PC-9 (cell line): ENCODE measurements at regions of chr2 and their contacts with region 1.

Region 1: DNA sequence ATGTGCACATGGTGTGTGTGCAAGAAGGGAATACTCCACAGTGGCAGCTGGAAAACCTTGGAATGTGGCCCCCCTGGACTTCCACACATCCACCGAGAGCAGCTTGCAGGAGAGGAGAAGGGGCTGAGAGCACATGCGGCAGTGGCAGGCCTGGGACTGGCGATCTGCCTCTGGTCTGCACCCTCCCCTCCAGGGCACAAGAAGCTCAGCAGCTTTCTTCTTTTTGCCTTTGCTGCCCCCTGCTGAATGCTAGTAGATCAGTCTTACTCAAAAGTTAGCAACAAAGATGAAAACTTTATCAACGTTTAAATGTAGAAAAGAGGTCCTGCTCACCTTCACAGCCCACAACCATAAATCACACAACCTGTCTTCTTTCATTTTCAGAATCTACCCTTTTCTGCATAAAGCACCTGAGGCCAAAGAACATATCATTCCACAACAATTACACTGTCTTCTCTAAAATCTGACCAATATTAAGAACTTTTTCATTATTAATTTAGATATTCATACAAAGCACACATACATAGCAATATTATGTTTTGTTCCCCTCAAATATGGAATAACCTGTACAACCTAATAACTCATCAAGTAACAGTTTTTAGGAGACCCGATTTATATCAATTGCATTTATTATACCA is 34.6 kb downstream of the TGFBRAP1 start:
- DNase-seq: peak; percentile 13 to 16
- H3K4me3 ChIP-seq: no peak overlapping the region
- H3K27ac ChIP-seq: no peak overlapping the region
- H3K4me1 ChIP-seq: no peaks in the 10 kb centered on the region
- H3K27me3 ChIP-seq: no peaks in the 10 kb centered on the region
- CTCF ChIP-seq: peak; percentile 67

Region 2: DNA sequence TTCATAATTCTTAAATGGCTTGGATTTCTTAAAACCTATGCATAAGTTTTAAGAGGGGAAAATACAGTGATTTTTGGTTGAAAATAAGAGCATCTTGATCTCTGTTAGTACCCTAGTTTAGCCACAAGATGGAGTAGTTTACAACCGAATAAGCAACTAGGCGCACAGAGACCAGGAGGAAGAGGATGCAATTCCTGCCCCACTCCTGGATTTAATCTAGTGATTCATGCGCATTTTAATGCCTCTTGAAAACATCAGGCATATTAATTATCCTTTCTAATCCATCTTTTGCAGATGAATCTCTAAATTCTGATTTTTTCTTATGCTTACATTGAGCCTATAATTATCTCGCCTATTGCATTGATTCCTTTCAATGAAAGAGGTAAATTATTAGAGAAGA is 180.4 kb before region 1 on chr2:
- CTCF ChIA-PET with region 1: no interaction called
- POLR2A ChIA-PET with region 1: no interaction called
- intact Hi-C with region 1: loop called (anchors 1 kb)
- DNase-seq: peak in 1 of 2 experiments; percentile 46
- H3K4me3 ChIP-seq: no peak overlapping the region
- H3K27ac ChIP-seq: no peak overlapping the region
- H3K4me1 ChIP-seq: no peaks in the 10 kb centered on the region
- H3K27me3 ChIP-seq: no peaks in the 10 kb centered on the region
- CTCF ChIP-seq: peak; percentile 88